Activated T-helper 2 cell treated with anti-CD3 and anti-CD28 coated beads, Interferon-gamma antibody, Interleukin-2, Interleukin-4, amounts not matched to agents 10 μg/mL and 5 μg/mL and 100 μg/mL, durations not matched to agents 14 hours and 24 hours and 36 hours (primary cell): ENCODE measurements at regions of chr22 and their contacts with region 1.

Region 1: GRCh38 chr22:17077255-17077654 is 7.5 kb upstream of the IL17RA start:
- DNase-seq: no peak
- H3K4me3 Mint-ChIP-seq: no peak overlapping the region
- H3K27ac Mint-ChIP-seq: no peak overlapping the region
- H3K4me1 Mint-ChIP-seq: peaks cover 20% of the 10 kb centered on the region
- H3K27me3 Mint-ChIP-seq: peaks cover 18% of the 10 kb centered on the region

Region 2: GRCh38 chr22:16970446-16970845 is 106.8 kb before region 1 on chr22:
- intact Hi-C with region 1: no loop called
- DNase-seq: peak; percentile 7
- H3K4me3 Mint-ChIP-seq: no peak overlapping the region
- H3K27ac Mint-ChIP-seq: no peak overlapping the region
- H3K4me1 Mint-ChIP-seq: peaks cover 7% of the 10 kb centered on the region
- H3K27me3 Mint-ChIP-seq: peaks cover 4% of the 10 kb centered on the region

Region 3: DNA sequence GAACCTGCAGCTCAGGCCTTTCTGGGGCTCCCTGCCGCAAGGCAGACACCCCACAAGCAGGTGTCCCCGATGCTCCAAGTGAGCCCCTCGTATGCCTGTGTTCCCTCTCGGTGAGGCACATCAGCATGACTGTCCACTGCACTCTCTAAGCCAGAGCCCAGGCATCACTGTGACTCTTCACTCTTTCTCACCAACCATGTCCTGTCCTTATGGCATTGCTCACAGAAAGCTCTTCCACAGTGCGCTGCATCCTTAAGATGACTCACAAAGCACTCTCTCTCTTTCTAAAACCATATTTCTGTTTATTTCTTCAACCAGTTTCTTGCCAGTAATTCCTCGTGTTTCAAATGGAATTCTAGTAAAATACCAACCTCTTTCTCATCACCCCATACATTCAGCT is 87.3 kb before region 1 on chr22:
- intact Hi-C with region 1: no loop called
- DNase-seq: no peak
- H3K4me3 Mint-ChIP-seq: no peak overlapping the region
- H3K27ac Mint-ChIP-seq: no peak overlapping the region
- H3K4me1 Mint-ChIP-seq: peaks cover 1% of the 10 kb centered on the region
- H3K27me3 Mint-ChIP-seq: peaks cover 4% of the 10 kb centered on the region

Region 4: GRCh38 chr22:17007257-17007656 is 70.0 kb before region 1 on chr22:
- intact Hi-C with region 1: no loop called
- DNase-seq: no peak
- H3K4me3 Mint-ChIP-seq: no peak overlapping the region
- H3K27ac Mint-ChIP-seq: no peak overlapping the region
- H3K4me1 Mint-ChIP-seq: no peaks in the 10 kb centered on the region
- H3K27me3 Mint-ChIP-seq: peaks cover 15% of the 10 kb centered on the region

Region 5: DNA sequence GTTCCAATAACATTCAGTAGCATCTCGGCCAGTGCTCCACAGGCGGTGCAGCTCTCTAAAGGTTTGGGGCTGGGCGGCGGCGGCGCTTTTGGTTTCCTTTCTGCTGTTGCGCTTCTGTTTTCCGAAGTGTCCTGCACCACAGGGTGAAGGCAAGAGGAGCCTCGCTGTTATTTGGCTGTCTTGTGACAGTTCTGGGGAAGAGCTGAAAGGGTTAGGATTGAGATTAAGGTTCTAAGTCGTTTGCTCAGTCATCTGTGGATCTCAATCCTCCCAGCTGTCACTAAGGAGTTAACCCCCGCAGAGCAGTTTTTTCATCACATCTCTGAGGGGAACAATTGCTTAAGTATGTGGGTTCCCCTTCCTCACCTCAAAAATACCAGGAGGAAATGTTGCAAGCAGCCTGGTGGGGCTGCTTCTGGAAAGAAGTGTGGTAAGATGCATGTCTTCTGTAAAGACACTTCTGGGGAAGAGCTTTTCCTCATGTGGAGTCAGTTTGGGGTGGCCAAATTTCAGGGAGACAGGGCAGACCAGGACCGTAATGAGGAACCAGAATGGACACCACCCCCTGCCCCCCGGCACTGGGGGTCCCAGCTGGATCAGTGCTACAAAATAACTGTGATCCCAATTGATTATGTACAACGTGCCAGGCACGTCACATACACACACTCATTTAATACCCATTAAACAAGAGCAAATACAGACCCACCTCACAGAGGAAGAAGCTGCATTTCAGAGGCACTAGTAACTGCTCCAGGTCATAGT is 29.7 kb after region 1 on chr22:
- intact Hi-C with region 1: loop called (anchors 2 kb)
- DNase-seq: no peak
- H3K4me3 Mint-ChIP-seq: peak overlapping the region; percentile 51
- H3K27ac Mint-ChIP-seq: peak overlapping the region; percentile 46
- H3K4me1 Mint-ChIP-seq: peaks cover 23% of the 10 kb centered on the region
- H3K27me3 Mint-ChIP-seq: no peaks in the 10 kb centered on the region

Region 6: DNA sequence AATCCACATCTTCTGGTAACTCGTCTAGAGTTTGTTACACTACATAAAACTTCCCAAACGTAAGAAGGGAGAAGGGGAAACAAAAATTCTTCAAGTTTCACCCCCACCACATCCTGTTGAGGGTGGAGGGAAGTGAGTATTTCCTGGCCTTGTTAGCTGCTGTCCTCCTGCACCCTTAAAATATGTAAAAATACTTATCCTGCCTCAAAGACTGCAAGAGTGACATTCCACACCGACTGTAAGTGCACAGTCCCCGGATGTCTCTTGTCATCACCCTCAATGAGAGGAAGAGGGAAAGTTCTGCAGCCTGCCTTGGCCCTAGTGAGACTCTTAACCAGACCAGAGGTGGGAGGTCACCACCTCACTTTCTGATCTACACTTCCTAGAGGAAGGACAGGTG is 40.6 kb after region 1 on chr22:
- intact Hi-C with region 1: no loop called
- DNase-seq: no peak
- H3K4me3 Mint-ChIP-seq: peak overlapping the region; percentile 20
- H3K27ac Mint-ChIP-seq: peak overlapping the region; percentile 47
- H3K4me1 Mint-ChIP-seq: peaks cover 42% of the 10 kb centered on the region
- H3K27me3 Mint-ChIP-seq: peaks cover 25% of the 10 kb centered on the region

Region 7: DNA sequence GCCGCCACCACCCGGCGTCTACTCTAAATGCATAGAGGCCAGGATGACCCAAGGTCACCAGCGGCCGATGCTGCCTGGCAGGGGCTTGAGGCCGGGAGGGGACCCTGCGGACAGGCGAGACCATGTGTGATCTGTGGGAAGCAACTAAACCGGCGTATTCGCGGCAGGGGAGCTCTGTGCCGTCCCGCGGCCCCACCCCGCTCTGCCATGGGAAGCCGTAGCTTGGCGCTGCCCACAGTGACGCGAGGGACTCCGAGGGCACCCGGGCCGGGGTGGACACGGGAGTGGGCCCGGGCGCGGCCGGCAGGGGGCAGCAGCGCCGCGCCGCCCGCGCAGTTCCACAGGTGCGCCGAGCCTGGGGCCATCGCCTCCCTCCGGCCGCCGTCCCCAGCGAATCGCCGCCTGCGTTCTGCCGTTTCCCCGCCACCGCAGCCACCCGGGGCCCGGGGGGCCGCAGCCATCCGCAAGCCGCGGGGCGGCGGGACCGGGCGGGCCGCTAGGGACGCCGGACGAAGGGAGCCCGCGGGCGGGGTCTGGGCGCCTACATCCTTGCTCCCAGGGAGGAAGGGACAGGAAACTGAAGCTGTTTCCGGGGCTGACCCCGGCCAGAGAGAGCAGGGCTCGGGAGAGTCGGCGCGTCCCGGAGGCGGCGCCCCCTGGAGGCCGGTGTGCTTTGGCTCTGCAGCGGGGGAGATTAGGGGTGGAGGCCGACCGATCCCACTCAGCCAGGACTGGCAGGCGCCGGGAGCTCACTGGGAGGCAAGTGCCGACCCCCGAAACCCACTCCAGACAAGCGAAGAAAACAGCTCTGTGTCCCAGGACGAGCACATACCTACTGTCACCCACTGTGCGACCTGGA is 94.3 kb after region 1 on chr22:
- intact Hi-C with region 1: loop called (anchors 1 kb)
- DNase-seq: peak; percentile 71
- H3K4me3 Mint-ChIP-seq: peak overlapping the region; percentile 79
- H3K27ac Mint-ChIP-seq: peak overlapping the region; percentile 50
- H3K4me1 Mint-ChIP-seq: peaks cover 2% of the 10 kb centered on the region
- H3K27me3 Mint-ChIP-seq: peaks cover 6% of the 10 kb centered on the region

Region 8: DNA sequence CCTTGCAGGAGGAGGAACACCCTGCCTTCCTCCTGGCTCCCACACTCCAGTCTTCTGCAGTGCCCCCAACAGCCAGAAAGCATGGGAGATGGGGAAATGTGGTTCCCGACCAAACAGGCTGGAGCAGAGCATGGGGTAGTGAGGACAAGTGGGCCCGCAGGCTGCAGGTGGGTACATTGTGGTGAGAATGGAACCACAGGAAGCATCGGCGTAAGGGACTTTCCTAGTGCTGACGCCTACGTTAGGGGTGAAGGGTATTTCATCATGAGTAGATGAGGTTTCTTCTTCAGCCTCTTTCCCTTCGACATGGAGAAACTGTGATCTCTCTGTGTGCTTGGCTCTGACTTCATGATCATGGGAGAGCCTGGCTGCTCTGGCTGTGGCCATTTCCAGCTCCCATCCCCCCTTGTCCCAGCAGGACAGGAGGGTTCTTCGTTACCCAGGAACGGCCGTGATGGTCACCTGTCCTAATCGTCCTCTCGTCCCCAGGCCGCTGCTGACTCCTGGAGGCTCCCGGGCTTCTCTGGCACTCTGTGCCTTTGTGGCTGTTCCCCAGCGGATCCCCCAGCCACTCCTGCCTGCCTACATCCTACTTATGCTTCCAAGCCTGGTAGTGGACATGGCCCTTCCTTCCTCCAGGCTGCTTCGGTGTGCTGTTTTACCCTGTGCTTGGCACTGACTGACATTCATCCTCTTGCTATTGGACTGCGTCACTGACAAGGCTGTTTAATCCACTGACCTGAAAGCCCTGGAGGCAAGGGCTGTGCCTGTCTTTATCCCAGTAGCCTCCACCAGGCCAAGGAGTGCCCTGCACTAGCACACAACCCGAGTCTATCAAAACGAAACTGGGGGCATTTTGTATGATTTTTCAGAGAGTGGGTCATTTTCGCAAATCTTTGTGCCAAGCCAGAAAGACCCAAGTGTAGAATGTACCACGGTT is 226.9 kb after region 1 on chr22:
- intact Hi-C with region 1: loop called (anchors 10 kb)
- DNase-seq: peak; percentile 65
- H3K4me3 Mint-ChIP-seq: no peak overlapping the region
- H3K27ac Mint-ChIP-seq: peak overlapping the region; percentile 71
- H3K4me1 Mint-ChIP-seq: peaks cover 25% of the 10 kb centered on the region
- H3K27me3 Mint-ChIP-seq: no peaks in the 10 kb centered on the region

Region 9: GRCh38 chr22:17501679-17502285 is 424.5 kb after region 1 on chr22:
- intact Hi-C with region 1: loop called (anchors 1 kb)
- DNase-seq: no peak
- H3K4me3 Mint-ChIP-seq: no peak overlapping the region
- H3K27ac Mint-ChIP-seq: no peak overlapping the region
- H3K4me1 Mint-ChIP-seq: no peaks in the 10 kb centered on the region
- H3K27me3 Mint-ChIP-seq: peaks cover 4% of the 10 kb centered on the region

Region 10: GRCh38 chr22:17773606-17774205 is 696.5 kb after region 1 on chr22:
- intact Hi-C with region 1: loop called (anchors 10 kb)
- DNase-seq: peak; percentile 40
- H3K4me3 Mint-ChIP-seq: peak overlapping the region; percentile 77
- H3K27ac Mint-ChIP-seq: no peak overlapping the region
- H3K4me1 Mint-ChIP-seq: peaks cover 42% of the 10 kb centered on the region
- H3K27me3 Mint-ChIP-seq: peaks cover 29% of the 10 kb centered on the region